Activated naive CD8-positive, alpha-beta T cell treated with anti-CD3 and anti-CD28 coated beads, Interleukin-2, amount 10 ng/mL, durations not matched to agents 7 days and 5 days (primary cell): ENCODE measurements at regions of chr6 and their contacts with region 1.

Region 1: DNA sequence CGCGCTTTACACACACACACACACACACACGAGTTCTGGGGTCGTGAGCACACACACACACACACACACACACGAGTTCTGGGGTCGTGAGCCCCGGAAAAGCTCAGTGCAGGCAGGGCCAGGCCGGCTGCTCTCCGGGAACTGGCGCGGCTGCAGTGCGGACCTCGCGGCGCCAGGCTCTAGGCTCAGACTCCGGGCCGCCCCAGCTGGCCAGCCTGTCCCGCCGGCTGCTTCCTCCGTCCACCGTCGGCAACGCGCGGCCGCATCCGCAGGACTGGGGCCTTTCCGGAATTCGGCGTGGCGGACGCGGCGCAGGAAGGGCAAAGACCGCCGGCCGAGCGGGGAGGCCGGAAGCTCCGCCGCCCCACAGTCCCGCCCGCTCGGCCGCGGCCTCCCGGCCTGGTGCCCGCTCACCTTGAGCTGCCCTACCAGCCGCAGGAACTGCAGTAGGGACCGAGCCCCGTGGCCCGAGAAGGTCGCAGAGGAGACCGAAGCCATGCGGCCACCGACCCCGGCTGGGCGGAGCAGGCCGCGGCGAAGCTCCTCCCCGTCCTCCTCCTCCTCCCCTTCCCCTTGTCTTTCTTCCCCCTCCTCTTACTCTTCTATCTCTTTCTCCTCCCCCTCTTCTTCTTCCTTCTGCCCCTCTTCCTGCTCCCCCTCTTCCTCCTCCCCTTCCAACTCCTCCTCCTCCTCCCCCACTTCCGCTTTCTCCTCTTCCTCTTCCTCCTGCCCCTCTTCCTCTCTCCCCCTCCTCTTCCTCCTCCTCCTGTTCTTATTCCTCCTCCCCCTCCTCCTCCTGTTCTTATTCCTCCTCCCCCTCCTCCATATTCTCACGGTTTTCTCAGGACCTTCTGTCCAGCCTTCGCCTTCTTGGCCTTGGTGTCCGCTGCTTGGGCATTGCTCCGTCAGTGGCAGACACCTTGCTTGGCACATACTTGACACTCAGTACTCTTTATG is at the start of gene HDDC2:
- DNase-seq: peak; percentile 72
- ATAC-seq: peak; percentile 73
- H3K4me3 Mint-ChIP-seq: peak within 1 kb of the TSS; percentile 92
- H3K27ac Mint-ChIP-seq: peak within 1 kb of the TSS; percentile 90
- H3K4me1 Mint-ChIP-seq: peaks cover 38% of the 10 kb centered on the region
- H3K27me3 Mint-ChIP-seq: peaks cover 21% of the 10 kb centered on the region
- total RNA-seq, gene HDDC2: 61.3 to 72.3 TPM

Region 2: GRCh38 chr6:125201961-125202591 is 99.6 kb before region 1 on chr6:
- POLR2A ChIA-PET with region 1: no interaction called
- DNase-seq: no peak
- ATAC-seq: no peak
- H3K4me3 Mint-ChIP-seq: no peak overlapping the region
- H3K27ac Mint-ChIP-seq: no peak overlapping the region
- H3K4me1 Mint-ChIP-seq: no peaks in the 10 kb centered on the region
- H3K27me3 Mint-ChIP-seq: peaks cover 16% of the 10 kb centered on the region

Region 3: DNA sequence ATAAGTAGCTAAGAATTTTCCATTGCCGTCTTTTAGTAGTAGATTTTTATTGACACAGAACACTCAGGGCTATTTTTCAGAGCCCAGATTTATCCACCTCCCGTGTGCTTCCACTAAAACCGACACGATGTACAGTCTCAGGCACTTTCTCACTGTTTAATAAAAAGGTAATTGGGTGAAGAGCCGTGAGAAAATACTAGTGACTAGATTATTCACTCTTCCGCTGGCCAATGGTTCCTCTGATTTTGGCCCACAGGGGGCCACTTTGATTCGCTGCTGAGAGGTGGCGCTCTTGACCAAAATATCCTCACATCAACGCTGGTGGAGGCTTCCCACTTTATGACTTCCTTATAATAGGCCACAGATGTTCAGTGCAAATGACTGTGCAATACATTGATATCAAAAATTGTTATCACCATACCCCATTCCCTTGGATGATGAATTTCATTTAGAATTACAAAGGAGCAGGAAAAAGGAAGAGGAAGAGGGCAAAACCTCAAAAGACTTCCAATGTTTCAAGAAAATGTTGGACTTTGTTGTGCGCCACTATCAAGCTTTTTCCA is 12.4 kb after region 1 on chr6:
- POLR2A ChIA-PET with region 1: no interaction called
- DNase-seq: peak; percentile 43
- ATAC-seq: peak; percentile 56
- H3K4me3 Mint-ChIP-seq: no peak overlapping the region
- H3K27ac Mint-ChIP-seq: no peak overlapping the region
- H3K4me1 Mint-ChIP-seq: peaks cover 1% of the 10 kb centered on the region
- H3K27me3 Mint-ChIP-seq: peaks cover 18% of the 10 kb centered on the region

Region 4: GRCh38 chr6:125363039-125363823 is 61.5 kb after region 1 on chr6:
- POLR2A ChIA-PET with region 1: no interaction called
- DNase-seq: no peak
- ATAC-seq: no peak
- H3K4me3 Mint-ChIP-seq: no peak overlapping the region
- H3K27ac Mint-ChIP-seq: no peak overlapping the region
- H3K4me1 Mint-ChIP-seq: peaks cover 3% of the 10 kb centered on the region
- H3K27me3 Mint-ChIP-seq: peaks cover 53% of the 10 kb centered on the region

Region 5: GRCh38 chr6:125764121-125764671 is 462.5 kb after region 1 on chr6:
- POLR2A ChIA-PET with region 1: interaction called, 11 read pairs
- DNase-seq: no peak
- ATAC-seq: no peak
- H3K4me3 Mint-ChIP-seq: no peak overlapping the region
- H3K27ac Mint-ChIP-seq: no peak overlapping the region
- H3K4me1 Mint-ChIP-seq: peaks cover 5% of the 10 kb centered on the region
- H3K27me3 Mint-ChIP-seq: peaks cover 32% of the 10 kb centered on the region